AG04449 (cell line): ENCODE measurements at regions of chr3 and their contacts with region 1.

Region 1: GRCh38 chr3:179133575-179133974 is 14.6 kb upstream of the PIK3CA start:
- DNase-seq: no peak
- H3K4me3 ChIP-seq: no peak overlapping the region
- CTCF ChIP-seq: no peak

Region 2: DNA sequence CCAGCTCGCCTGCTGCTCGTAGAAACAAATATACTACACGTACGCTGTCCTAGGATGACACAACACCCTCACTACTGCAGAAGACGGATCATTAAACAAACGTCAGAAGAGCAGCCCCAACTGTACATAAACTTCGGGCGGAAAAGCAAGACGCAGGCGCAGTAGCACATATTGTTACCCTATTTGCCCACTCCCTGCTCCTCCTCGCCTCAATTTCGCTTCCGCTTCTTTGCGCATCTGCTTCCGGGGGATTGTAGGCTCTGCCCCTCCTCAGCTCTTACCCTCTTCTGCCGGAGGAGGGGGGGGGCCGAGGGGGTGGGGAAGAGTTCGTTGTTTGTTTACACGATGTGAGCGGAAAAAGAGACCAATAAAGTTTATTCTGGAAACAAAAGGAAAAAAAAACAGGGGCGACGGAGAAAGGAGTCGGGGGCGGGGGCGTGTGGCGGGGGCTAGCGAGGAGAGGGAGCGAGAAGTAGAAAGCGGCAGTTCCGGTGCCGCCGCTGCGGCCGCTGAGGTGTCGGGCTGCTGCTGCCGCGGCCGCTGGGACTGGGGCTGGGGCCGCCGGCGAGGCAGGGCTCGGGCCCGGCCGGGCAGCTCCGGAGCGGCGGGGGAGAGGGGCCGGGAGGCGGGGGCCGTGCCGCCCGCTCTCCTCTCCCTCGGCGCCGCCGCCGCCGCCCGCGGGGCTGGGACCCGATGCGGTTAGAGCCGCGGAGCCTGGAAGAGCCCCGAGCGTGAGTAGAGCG is 14.5 kb after region 1 on chr3 and contains the start of gene PIK3CA:
- CTCF ChIA-PET with region 1: interaction called, 27 read pairs
- POLR2A ChIA-PET with region 1: no interaction called
- DNase-seq: peak; percentile 91
- H3K4me3 ChIP-seq: peak within 1 kb of the TSS; percentile 69
- CTCF ChIP-seq: no peak

Region 3: GRCh38 chr3:179272385-179272784 is 138.8 kb after region 1 on chr3:
- CTCF ChIA-PET with region 1: no interaction called
- POLR2A ChIA-PET with region 1: no interaction called
- DNase-seq: no peak
- H3K4me3 ChIP-seq: no peak overlapping the region
- CTCF ChIP-seq: peak; percentile 26